ENCODE measurements at regions of chr14 and their contacts with region 1.

Region 1: GRCh38 chr14:23120541-23121251 is 1.6 kb upstream of the CEBPE start:
- DNase-seq: peak; percentile 60
- ATAC-seq: peak; percentile 96
- H3K4me3 ChIP-seq: no peak overlapping the region; the same call in 1 of the 2 replicates
- H3K27ac ChIP-seq: peak overlapping the region; percentile 24; the same call in 1 of the 2 replicates
- H3K4me1 ChIP-seq: peaks cover 20% of the 10 kb centered on the region
- H3K27me3 ChIP-seq: no peaks in the 10 kb centered on the region; a peak in 2 of 4 replicates
- CTCF ChIP-seq: peak; percentile 100; a peak in 5 of 6 replicates
- EP300 ChIP-seq: no peak
- POLR2A ChIP-seq: no peak
- RAD21 ChIP-seq: peak; percentile 93

Region 2: GRCh38 chr14:22811722-22812121 is 309.0 kb before region 1 on chr14:
- CTCF ChIA-PET with region 1: no interaction called
- POLR2A ChIA-PET with region 1: no interaction called
- RAD21 ChIA-PET with region 1: no interaction called
- SMC1A ChIA-PET with region 1: no interaction called
- in situ Hi-C with region 1: no loop called
- intact Hi-C with region 1: no loop called
- DNase-seq: no peak
- ATAC-seq: peak; percentile 22
- H3K4me3 ChIP-seq: peak overlapping the region; percentile 78
- H3K27ac ChIP-seq: peak overlapping the region; percentile 71
- H3K4me1 ChIP-seq: peaks cover 29% of the 10 kb centered on the region
- H3K27me3 ChIP-seq: no peaks in the 10 kb centered on the region
- CTCF ChIP-seq: no peak
- EP300 ChIP-seq: no peak
- POLR2A ChIP-seq: no peak
- RAD21 ChIP-seq: no peak

Region 3: GRCh38 chr14:23076785-23077408 is 43.8 kb before region 1 on chr14:
- CTCF ChIA-PET with region 1: interaction called, 20 read pairs
- POLR2A ChIA-PET with region 1: no interaction called
- RAD21 ChIA-PET with region 1: interaction called, 13 read pairs
- SMC1A ChIA-PET with region 1: interaction called, 9 read pairs
- in situ Hi-C with region 1: no loop called
- intact Hi-C with region 1: no loop called
- DNase-seq: no peak
- ATAC-seq: peak; percentile 79
- H3K4me3 ChIP-seq: no peak overlapping the region
- H3K27ac ChIP-seq: no peak overlapping the region
- H3K4me1 ChIP-seq: 0 out of 2 replicates have a peak, but pooled peaks cover 1% of the 10 kb centered on the region
- H3K27me3 ChIP-seq: no peaks in the 10 kb centered on the region
- CTCF ChIP-seq: peak; percentile 49 to 60 (median 59)
- EP300 ChIP-seq: no peak
- POLR2A ChIP-seq: no peak
- RAD21 ChIP-seq: peak; percentile 48; the same call in 1 of the 2 replicates

Region 4: GRCh38 chr14:23095196-23096108 is 25.2 kb before region 1 on chr14 and contains the start of gene C14orf119:
- CTCF ChIA-PET with region 1: interaction called, 37 read pairs
- POLR2A ChIA-PET with region 1: interaction called, 5 read pairs
- RAD21 ChIA-PET with region 1: interaction called, 8 read pairs
- SMC1A ChIA-PET with region 1: interaction called, 6 read pairs
- in situ Hi-C with region 1: no loop called
- intact Hi-C with region 1: no loop called
- DNase-seq: peak; percentile 99
- ATAC-seq: peak; percentile 93
- H3K4me3 ChIP-seq: peak within 1 kb of the TSS; percentile 92
- H3K27ac ChIP-seq: peak within 1 kb of the TSS; percentile 99
- H3K4me1 ChIP-seq: peaks cover 3% of the 10 kb centered on the region; the same call in 1 of the 2 replicates
- H3K27me3 ChIP-seq: no peaks in the 10 kb centered on the region
- CTCF ChIP-seq: no peak
- EP300 ChIP-seq: no peak
- POLR2A ChIP-seq: peak; percentile 61; the same call in 1 of the 2 replicates
- RAD21 ChIP-seq: no peak
- polyA plus RNA-seq, gene C14orf119: 166 to 228 TPM

Region 5: DNA sequence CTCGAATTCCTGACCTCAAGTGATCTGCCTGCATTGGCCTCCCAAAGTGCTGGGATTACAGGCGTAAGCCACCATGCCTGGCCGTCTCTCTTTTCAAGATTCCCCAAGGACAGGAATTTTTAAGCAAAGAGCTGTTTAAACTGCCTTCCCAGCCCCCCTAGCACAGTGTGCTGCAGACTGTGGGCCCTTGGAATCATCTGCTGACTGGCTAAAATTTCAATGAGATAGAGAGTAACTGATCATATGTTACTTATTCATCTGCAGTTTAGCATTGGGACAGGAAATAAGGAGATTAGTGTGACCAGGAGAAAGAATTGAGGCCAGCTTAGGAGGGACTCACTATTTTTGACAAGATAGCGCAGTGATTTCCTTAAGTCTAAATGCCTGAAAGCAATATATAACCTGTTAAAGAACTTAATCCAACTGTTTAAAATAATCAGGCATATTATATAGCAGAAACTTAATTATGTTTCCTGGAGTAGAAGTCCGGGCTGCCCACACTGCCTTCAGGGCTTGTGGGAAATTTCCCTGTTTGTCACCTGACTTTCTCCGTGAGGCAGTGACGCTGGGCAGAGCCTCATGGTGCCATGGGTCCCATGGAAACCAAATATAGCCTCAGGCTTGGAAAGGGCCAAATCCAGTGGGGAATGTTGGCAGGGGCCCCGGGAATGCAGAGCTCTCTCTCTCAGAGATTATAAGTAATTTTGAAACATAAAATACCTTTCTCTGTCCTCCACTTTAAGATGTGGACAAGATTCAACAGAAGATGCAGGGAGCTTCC is 21.2 kb after region 1 on chr14:
- CTCF ChIA-PET with region 1: interaction called, 16 read pairs
- POLR2A ChIA-PET with region 1: no interaction called
- RAD21 ChIA-PET with region 1: interaction called, 3 read pairs
- SMC1A ChIA-PET with region 1: interaction called, 4 read pairs
- in situ Hi-C with region 1: no loop called
- intact Hi-C with region 1: no loop called
- DNase-seq: no peak
- ATAC-seq: no peak
- H3K4me3 ChIP-seq: no peak overlapping the region
- H3K27ac ChIP-seq: no peak overlapping the region
- H3K4me1 ChIP-seq: no peaks in the 10 kb centered on the region
- H3K27me3 ChIP-seq: peaks cover 3% of the 10 kb centered on the region in 2 experiments; a peak in 3 of 4 replicates
- CTCF ChIP-seq: no peak
- EP300 ChIP-seq: no peak
- POLR2A ChIP-seq: no peak
- RAD21 ChIP-seq: no peak

Region 6: GRCh38 chr14:23294734-23295561 is 174.3 kb after region 1 on chr14:
- CTCF ChIA-PET with region 1: interaction called, 40 read pairs
- POLR2A ChIA-PET with region 1: no interaction called
- RAD21 ChIA-PET with region 1: interaction called, 5 read pairs
- SMC1A ChIA-PET with region 1: interaction called, 8 read pairs
- in situ Hi-C with region 1: no loop called
- intact Hi-C with region 1: loop called (anchors 2 kb)
- DNase-seq: no peak
- ATAC-seq: peak; percentile 92
- H3K4me3 ChIP-seq: no peak overlapping the region
- H3K27ac ChIP-seq: no peak overlapping the region
- H3K4me1 ChIP-seq: 0 out of 2 replicates have a peak, but pooled peaks cover 4% of the 10 kb centered on the region
- H3K27me3 ChIP-seq: no peaks in the 10 kb centered on the region
- CTCF ChIP-seq: peak; percentile 68 to 85 (median 84)
- EP300 ChIP-seq: no peak
- POLR2A ChIP-seq: no peak
- RAD21 ChIP-seq: peak; percentile 52

Region 7: GRCh38 chr14:23320774-23321571 is 200.3 kb after region 1 on chr14 and contains the start of gene PABPN1:
- CTCF ChIA-PET with region 1: interaction called, 27 read pairs
- POLR2A ChIA-PET with region 1: no interaction called
- RAD21 ChIA-PET with region 1: interaction called, 15 read pairs
- SMC1A ChIA-PET with region 1: interaction called, 7 read pairs
- in situ Hi-C with region 1: no loop called
- intact Hi-C with region 1: no loop called
- DNase-seq: peak; percentile 99
- ATAC-seq: peak; percentile 95
- H3K4me3 ChIP-seq: peak within 1 kb of the TSS; percentile 99
- H3K27ac ChIP-seq: peak within 1 kb of the TSS; percentile 87
- H3K4me1 ChIP-seq: peaks cover 13% of the 10 kb centered on the region
- H3K27me3 ChIP-seq: no peaks in the 10 kb centered on the region
- CTCF ChIP-seq: no peak
- EP300 ChIP-seq: peak in 1 of 2 experiments; percentile 58; a peak in 1 of 4 replicates
- POLR2A ChIP-seq: peak; percentile 86
- RAD21 ChIP-seq: no peak
- polyA plus RNA-seq, gene PABPN1: 31.3 to 35.6 TPM

Region 8: DNA sequence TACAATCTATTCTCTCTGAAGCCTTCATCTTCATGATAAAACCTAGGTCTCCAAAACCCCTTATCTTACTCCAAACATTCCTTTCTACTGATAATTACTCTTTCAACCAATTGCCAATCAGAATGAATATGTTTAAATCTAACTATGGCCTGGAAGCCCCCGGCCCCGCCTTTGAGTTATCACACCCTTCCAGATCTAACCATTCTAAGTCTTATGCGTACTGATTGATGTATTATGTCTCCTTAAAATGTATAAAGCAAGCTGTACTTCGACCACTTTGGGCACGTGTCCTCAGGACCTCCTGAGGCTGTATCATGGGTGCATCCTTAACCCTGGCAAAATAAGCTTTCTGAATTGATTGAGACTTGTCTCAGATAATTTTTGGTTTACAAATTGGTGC is 214.9 kb after region 1 on chr14:
- CTCF ChIA-PET with region 1: no interaction called
- POLR2A ChIA-PET with region 1: no interaction called
- RAD21 ChIA-PET with region 1: no interaction called
- SMC1A ChIA-PET with region 1: no interaction called
- in situ Hi-C with region 1: no loop called
- intact Hi-C with region 1: no loop called
- DNase-seq: no peak
- ATAC-seq: no peak
- H3K4me3 ChIP-seq: no peak overlapping the region
- H3K27ac ChIP-seq: no peak overlapping the region
- H3K4me1 ChIP-seq: no peaks in the 10 kb centered on the region
- H3K27me3 ChIP-seq: no peaks in the 10 kb centered on the region
- CTCF ChIP-seq: no peak
- EP300 ChIP-seq: no peak
- POLR2A ChIP-seq: no peak
- RAD21 ChIP-seq: no peak

Measured in GM12878 (cell line).